ENCODE measurements at regions of chr20 and their contacts with region 1.

Region 1: GRCh38 chr20:35652641-35653429 is 11.9 kb downstream of the CPNE1 start:
- DNase-seq: no peak
- H3K4me3 ChIP-seq: no peak overlapping the region
- H3K27ac ChIP-seq: no peak overlapping the region
- H3K4me1 ChIP-seq: no peaks in the 10 kb centered on the region
- H3K27me3 ChIP-seq: no peaks in the 10 kb centered on the region
- CTCF ChIP-seq: no peak

Region 2: DNA sequence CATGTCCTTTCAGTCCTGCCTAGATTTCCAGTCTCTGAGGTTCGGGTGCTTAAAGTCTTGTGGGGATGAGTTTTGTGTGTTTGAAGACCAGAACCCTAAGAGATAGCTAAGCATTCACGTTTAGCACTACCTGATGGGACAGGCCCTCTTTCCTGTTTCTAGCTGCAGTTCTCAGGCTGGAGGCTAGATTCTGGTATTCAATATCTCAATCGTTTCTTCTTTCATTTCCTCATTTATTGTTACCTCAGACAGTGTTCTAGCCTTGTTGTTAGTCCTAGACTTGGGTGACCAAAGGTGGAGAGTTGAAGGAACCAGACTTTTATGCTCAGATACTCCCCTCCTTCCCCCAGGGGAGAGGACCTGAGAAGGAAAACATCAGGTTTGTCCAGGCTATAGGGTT is 180.6 kb before region 1 on chr20:
- CTCF ChIA-PET with region 1: no interaction called
- dilution Hi-C with region 1: loop called (anchors 5 kb)
- in situ Hi-C with region 1: no loop called
- intact Hi-C with region 1: no loop called
- DNase-seq: no peak
- H3K4me3 ChIP-seq: no peak overlapping the region
- H3K27ac ChIP-seq: no peak overlapping the region
- H3K4me1 ChIP-seq: no peaks in the 10 kb centered on the region
- H3K27me3 ChIP-seq: no peaks in the 10 kb centered on the region
- CTCF ChIP-seq: no peak

Region 3: GRCh38 chr20:35490736-35491181 is 162.1 kb before region 1 on chr20:
- CTCF ChIA-PET with region 1: no interaction called
- dilution Hi-C with region 1: no loop called
- in situ Hi-C with region 1: no loop called
- intact Hi-C with region 1: no loop called
- DNase-seq: no peak
- H3K4me3 ChIP-seq: no peak overlapping the region
- H3K27ac ChIP-seq: no peak overlapping the region
- H3K4me1 ChIP-seq: no peaks in the 10 kb centered on the region
- H3K27me3 ChIP-seq: no peaks in the 10 kb centered on the region
- CTCF ChIP-seq: no peak

Region 4: GRCh38 chr20:36085686-36086267 is 432.9 kb after region 1 on chr20:
- CTCF ChIA-PET with region 1: no interaction called
- dilution Hi-C with region 1: no loop called
- in situ Hi-C with region 1: no loop called
- intact Hi-C with region 1: no loop called
- DNase-seq: peak; percentile 92
- H3K4me3 ChIP-seq: peak overlapping the region in 1 of 3 experiments; percentile 16
- H3K27ac ChIP-seq: peak overlapping the region; percentile 92
- H3K4me1 ChIP-seq: peaks cover 40% of the 10 kb centered on the region
- H3K27me3 ChIP-seq: no peaks in the 10 kb centered on the region
- CTCF ChIP-seq: no peak

Measured in mammary epithelial cell (primary cell).